OCI-LY7 (cell line): ENCODE measurements at regions of chr5 and their contacts with region 1.

Region 1: GRCh38 chr5:38086777-38087176 is 171.6 kb upstream of the EGFLAM start:
- DNase-seq: no peak
- H3K4me3 ChIP-seq: no peak overlapping the region
- H3K27ac ChIP-seq: no peak overlapping the region
- H3K4me1 ChIP-seq: no peaks in the 10 kb centered on the region
- CTCF ChIP-seq: no peak

Region 2: DNA sequence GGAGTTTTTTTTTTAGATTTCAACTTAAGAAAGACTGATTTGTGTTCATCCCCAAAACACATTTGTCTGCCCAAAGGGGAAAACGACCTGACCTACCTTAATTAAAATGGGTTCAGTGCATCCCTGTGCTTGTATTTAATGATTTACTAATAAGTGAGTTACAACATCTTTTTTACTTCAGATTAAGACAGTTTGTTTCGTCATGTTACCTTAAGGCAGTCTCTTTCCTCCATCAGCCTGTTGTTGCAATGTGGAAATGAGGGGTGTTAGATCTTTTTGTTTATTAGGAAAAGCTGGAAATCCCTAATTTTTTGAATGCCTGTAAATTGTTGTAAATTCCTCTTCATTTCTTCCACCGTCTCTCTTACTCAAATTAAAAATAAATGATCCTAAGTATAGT is 424.4 kb before region 1 on chr5:
- CTCF ChIA-PET with region 1: no interaction called
- POLR2A ChIA-PET with region 1: interaction called, 11 read pairs
- intact Hi-C with region 1: no loop called
- DNase-seq: no peak
- H3K4me3 ChIP-seq: no peak overlapping the region
- H3K27ac ChIP-seq: no peak overlapping the region
- H3K4me1 ChIP-seq: no peaks in the 10 kb centered on the region
- CTCF ChIP-seq: no peak